PC-9 (cell line): ENCODE measurements at regions of chr2 and their contacts with region 1.

Region 1: DNA sequence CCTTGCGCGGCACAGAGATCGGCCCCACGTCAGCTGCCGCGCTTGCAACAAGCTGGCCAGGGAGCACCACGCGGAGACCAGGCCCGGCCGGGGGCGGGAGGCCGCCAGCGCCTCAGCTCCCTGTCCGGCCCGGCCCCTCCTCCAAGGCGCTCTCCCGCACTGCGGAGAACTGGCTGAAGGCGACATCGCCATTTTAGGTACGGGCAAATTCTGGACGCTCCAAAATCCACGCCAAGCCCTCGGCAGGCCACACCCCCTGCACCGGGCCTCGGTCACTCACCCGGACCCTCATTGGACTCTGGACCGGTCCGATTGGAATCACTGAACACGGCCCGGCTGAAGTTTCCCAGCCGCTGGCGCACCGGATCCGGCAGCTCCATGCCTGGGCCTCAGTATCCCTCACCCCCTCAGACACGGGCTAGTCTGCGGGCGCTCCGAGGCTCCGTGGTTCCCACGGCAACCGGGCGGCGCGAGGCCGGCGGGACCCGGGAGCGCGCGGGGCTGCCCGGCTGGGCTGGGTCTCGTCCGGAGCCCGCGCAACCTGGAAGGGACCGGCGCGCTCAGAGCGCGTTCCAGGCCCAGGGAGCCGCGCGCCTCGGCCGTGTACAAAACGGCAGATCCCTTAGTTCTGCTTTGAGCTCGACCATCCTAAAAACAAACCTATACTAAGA is at the start of gene TMEM17:
- DNase-seq: peak; percentile 77 to 94
- H3K4me3 ChIP-seq: peak within 1 kb of the TSS; percentile 59
- H3K27ac ChIP-seq: peak within 1 kb of the TSS; percentile 77
- H3K4me1 ChIP-seq: peaks cover 57% of the 10 kb centered on the region
- H3K27me3 ChIP-seq: no peaks in the 10 kb centered on the region
- CTCF ChIP-seq: no peak
- total RNA-seq, gene TMEM17: 7.6 and 11.0 TPM in 2 replicates

Region 2: DNA sequence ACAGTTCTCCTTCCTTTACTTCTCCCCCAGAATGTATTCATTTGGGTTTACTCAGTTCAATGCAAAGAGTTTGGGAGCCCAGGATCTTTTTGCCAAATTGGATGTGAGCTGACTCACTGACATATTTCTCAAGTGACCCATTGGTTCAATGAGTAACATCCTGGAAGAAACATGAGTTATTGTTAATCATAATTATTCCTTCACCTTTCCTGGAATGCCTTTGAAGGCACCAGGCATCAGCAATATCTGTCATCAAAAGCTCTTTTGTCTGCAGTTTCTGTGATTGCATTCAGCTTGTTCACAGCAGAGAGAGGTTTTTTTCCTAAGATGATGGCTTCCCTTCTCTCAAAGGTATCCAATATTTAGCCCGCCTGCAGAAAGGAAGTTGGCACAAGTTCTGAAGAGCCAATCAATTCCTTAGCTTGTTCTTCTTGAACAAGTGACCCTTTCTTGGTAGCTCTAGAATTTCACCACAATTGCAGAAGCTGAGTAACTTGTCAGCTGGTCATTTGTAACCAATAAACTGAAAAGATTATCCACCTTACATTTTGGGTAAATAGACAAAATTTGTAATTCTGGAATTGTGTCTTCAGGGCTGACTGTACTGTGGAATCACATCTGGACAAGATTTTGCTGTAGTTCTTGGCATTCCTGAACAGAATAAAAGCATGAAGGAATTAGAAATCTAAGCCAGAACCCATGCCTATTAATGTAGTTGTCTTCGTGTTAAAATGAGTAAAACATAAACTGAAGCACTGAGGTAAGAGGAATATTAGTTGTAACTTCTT is 72.3 kb after region 1 on chr2:
- CTCF ChIA-PET with region 1: interaction called, 3 read pairs
- POLR2A ChIA-PET with region 1: interaction called, 5 read pairs
- intact Hi-C with region 1: loop called (anchors 1 kb)
- DNase-seq: peak; percentile 45 to 98
- H3K4me3 ChIP-seq: peak overlapping the region; percentile 24; the same call in 1 of the 2 replicates
- H3K27ac ChIP-seq: peak overlapping the region; percentile 99
- H3K4me1 ChIP-seq: peaks cover 41% of the 10 kb centered on the region
- H3K27me3 ChIP-seq: no peaks in the 10 kb centered on the region
- CTCF ChIP-seq: no peak

Region 3: GRCh38 chr2:62660582-62661262 is 154.8 kb after region 1 on chr2:
- CTCF ChIA-PET with region 1: no interaction called
- POLR2A ChIA-PET with region 1: interaction called, 6 read pairs
- intact Hi-C with region 1: loop called (anchors 2 kb)
- DNase-seq: peak; percentile 51 to 97
- H3K4me3 ChIP-seq: peak overlapping the region; percentile 8; the same call in 1 of the 2 replicates
- H3K27ac ChIP-seq: peak overlapping the region; percentile 80
- H3K4me1 ChIP-seq: peaks cover 62% of the 10 kb centered on the region
- H3K27me3 ChIP-seq: no peaks in the 10 kb centered on the region
- CTCF ChIP-seq: no peak

Region 4: DNA sequence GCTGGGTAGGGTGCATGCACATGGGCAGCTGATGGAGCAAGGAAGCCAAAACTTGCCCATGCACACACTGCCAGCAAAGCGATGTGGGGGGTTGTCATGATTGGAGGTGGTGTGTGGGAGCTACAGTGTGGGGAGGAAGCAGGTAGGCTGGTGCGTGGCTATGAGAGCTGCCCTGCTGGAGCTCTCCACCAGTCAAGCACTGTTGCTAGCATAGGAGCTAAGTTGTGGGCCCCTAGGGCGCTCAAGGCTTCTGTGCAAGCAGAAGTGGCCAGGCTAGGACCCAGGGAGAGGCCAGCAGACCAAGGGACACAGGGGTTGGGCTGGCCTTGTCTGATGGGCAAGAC is 219.8 kb after region 1 on chr2:
- CTCF ChIA-PET with region 1: interaction called, 11 read pairs
- POLR2A ChIA-PET with region 1: no interaction called
- intact Hi-C with region 1: no loop called
- DNase-seq: no peak
- H3K4me3 ChIP-seq: no peak overlapping the region
- H3K27ac ChIP-seq: no peak overlapping the region
- H3K4me1 ChIP-seq: no peaks in the 10 kb centered on the region
- H3K27me3 ChIP-seq: no peaks in the 10 kb centered on the region
- CTCF ChIP-seq: no peak